IMR-90 (cell line): ENCODE measurements at regions of chr20 and their contacts with region 1.

Region 1: DNA sequence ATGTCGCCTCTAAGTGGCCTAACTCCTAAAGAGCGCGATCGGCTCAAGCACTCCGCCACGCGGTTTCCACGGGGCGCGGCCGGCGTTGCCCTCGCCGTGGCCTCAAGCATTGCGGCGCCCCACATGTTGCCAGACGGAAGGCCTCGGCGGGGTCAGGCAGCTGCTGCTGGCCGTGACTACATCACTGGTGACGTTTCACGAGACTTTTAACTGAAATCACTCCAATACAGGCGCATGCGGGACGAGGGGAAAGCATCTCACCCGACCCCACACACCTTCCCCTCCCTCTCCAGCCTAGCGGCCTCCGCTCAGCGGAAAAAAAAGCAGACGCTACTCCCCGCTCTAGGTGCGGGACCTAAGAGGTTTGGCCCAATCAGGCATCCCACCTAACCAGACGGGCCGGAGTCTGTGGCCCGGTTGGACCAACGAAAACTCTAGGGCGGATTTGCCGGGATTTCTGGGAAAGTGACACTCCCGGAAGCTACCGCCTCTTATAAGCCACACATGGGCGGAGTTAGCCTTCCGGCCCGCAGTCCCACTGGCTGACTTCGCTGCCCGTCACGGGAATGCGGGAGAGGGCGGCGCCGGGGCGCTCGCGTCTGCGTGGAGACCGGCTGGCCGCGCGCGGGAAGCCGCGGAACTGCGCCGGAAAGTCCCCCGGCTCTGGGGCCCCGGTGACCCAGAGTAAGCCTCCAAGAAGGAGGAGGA is at the start of gene NXT1:
- DNase-seq: peak; percentile 99
- ATAC-seq: peak; percentile 89
- H3K4me3 ChIP-seq: peak within 1 kb of the TSS; percentile 72
- H3K27ac ChIP-seq: peak within 1 kb of the TSS; percentile 95
- H3K4me1 ChIP-seq: peaks cover 5% of the 10 kb centered on the region
- H3K27me3 ChIP-seq: no peaks in the 10 kb centered on the region
- CTCF ChIP-seq: no peak
- POLR2A ChIP-seq: peak; percentile 92
- RAD21 ChIP-seq: no peak
- total RNA-seq, gene NXT1: 25.5 and 25.8 TPM in 2 replicates

Region 2: DNA sequence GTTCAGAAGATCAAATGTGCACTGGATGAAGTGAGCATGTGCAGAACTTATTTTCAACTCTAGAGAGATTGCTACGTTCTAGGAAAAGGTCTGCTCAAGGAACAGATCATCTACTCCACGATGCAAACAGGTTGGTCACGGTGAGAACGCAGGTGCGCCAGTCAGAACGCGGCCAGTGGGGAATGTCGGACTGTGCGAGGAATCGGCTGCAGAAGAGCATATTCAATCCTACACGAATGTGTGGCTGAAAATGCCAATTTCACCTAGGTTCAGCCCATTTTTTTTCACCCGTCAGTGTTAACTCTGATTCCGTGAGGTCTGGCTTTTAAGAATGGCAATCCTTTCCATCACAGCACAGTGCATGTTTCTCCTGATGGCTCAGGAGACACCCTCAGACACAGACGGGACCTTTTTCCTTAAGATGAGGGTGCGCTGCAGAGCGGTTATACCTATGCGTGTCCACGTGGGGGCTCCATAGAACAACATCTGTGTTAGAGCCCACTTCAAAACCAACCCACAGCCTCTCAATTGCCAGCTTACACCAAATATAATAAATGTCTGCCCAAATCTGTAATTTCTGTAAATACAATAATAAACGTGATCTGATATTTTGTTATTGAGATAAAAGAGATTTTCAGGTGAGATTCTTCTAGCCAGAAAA is 1016.3 kb before region 1 on chr20:
- CTCF ChIA-PET with region 1: no interaction called
- POLR2A ChIA-PET with region 1: no interaction called
- dilution Hi-C with region 1: no loop called
- in situ Hi-C with region 1: loop called (anchors 25 kb)
- intact Hi-C with region 1: no loop called
- DNase-seq: peak; percentile 47
- ATAC-seq: peak; percentile 99
- H3K4me3 ChIP-seq: no peak overlapping the region
- H3K27ac ChIP-seq: no peak overlapping the region
- H3K4me1 ChIP-seq: no peaks in the 10 kb centered on the region
- H3K27me3 ChIP-seq: no peaks in the 10 kb centered on the region
- CTCF ChIP-seq: peak; percentile 68
- POLR2A ChIP-seq: no peak
- RAD21 ChIP-seq: peak; percentile 37; the same call in 1 of the 2 replicates

Region 3: DNA sequence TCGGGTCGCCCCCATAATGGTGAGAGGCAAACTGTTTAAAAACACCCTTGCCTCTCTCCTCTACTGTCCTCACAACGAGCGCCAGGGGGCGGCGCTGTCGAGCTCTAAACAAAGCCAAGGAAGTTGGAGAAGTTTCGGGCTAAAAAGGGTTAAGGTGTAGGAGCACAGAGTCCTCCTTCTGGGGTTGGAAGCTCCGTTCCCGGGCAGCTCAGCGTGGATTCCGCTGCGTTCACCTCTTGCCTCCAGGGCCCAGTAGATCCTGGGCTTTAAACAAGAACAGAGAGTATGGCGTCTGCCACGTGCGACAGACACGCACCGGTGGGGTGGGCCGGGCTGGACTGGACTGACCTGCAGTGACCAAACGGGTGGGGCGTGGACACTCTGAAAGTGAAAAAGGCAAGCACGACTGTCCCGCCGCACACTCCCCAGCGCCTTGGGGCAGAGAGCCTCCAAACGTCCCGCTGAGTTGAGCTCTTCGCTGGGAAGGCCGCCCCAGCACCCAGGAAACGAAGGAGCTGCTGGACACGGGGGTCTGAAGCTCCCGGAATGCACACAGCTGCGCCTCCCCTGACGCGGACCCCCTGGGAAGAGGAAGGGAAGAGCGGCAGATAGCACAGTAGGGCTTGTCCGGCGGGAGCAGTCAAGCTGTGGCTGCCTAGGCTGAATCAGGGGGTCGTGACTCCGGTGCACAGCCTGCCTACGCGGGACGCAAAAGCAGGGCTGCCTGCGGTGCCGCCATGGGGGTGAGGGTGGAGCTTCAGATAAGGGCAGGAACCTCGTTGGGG is 299.3 kb before region 1 on chr20:
- CTCF ChIA-PET with region 1: interaction called, 7 read pairs
- POLR2A ChIA-PET with region 1: no interaction called
- dilution Hi-C with region 1: no loop called
- in situ Hi-C with region 1: loop called (anchors 10 kb)
- intact Hi-C with region 1: no loop called
- DNase-seq: peak; percentile 52
- ATAC-seq: peak; percentile 54
- H3K4me3 ChIP-seq: peak overlapping the region; percentile 31
- H3K27ac ChIP-seq: no peak overlapping the region; the same call in 1 of the 2 replicates
- H3K4me1 ChIP-seq: peaks cover 4% of the 10 kb centered on the region; the same call in 1 of the 2 replicates
- H3K27me3 ChIP-seq: peaks cover 74% of the 10 kb centered on the region
- CTCF ChIP-seq: peak; percentile 63
- POLR2A ChIP-seq: no peak
- RAD21 ChIP-seq: peak; percentile 67

Region 4: GRCh38 chr20:23187751-23188150 is 162.6 kb before region 1 on chr20:
- CTCF ChIA-PET with region 1: interaction called, 3 read pairs
- POLR2A ChIA-PET with region 1: interaction called, 16 read pairs
- dilution Hi-C with region 1: no loop called
- in situ Hi-C with region 1: no loop called
- intact Hi-C with region 1: no loop called
- DNase-seq: no peak
- ATAC-seq: no peak
- H3K4me3 ChIP-seq: no peak overlapping the region
- H3K27ac ChIP-seq: no peak overlapping the region
- H3K4me1 ChIP-seq: no peaks in the 10 kb centered on the region
- H3K27me3 ChIP-seq: peaks cover 16% of the 10 kb centered on the region
- CTCF ChIP-seq: no peak
- POLR2A ChIP-seq: no peak
- RAD21 ChIP-seq: no peak

Region 5: DNA sequence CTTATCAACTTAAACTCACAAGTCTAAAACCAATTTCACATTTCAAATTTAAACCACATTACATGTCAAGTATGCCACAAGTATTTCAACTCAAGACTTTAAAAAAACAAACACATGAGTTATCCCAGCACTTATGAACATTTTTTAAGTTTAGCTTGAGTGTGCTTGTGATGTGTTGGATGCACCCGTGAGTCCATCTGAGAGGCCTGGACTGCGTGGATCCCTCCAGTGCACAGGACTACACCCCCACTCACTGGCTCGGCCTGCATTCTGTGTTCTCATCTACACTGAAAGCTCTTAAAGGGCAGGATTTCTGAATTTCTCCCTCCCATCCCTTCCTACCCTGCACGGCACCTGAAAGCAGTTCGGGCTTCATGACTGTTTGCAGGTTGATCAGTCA is 135.4 kb before region 1 on chr20:
- CTCF ChIA-PET with region 1: no interaction called
- POLR2A ChIA-PET with region 1: no interaction called
- dilution Hi-C with region 1: no loop called
- in situ Hi-C with region 1: no loop called
- intact Hi-C with region 1: no loop called
- DNase-seq: peak; percentile 55
- ATAC-seq: peak; percentile 54; the same call in 1 of the 2 replicates
- H3K4me3 ChIP-seq: no peak overlapping the region
- H3K27ac ChIP-seq: no peak overlapping the region
- H3K4me1 ChIP-seq: no peaks in the 10 kb centered on the region
- H3K27me3 ChIP-seq: peaks cover 25% of the 10 kb centered on the region
- CTCF ChIP-seq: no peak
- POLR2A ChIP-seq: no peak
- RAD21 ChIP-seq: no peak

Region 6: DNA sequence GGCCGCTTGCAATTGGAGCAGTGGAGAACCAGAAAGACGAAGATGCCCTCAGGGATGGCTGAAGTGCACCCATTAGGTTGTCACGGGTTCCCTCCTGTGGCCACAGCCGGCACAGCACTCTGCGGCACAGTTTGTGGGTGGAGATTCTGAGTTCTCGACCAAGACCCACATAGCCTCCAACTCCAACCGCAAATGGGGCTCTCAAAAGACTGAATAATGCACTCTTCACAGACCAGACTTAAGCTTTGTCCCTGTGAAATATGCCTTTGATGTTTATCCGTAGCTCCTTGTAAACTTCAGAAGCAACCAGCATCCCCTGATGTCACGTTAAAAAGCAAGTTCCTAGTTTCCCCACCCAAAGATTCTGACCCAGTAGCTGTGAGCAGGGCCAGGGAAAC is 256.3 kb after region 1 on chr20:
- CTCF ChIA-PET with region 1: interaction called, 4 read pairs
- POLR2A ChIA-PET with region 1: no interaction called
- dilution Hi-C with region 1: no loop called
- in situ Hi-C with region 1: no loop called
- intact Hi-C with region 1: loop called (anchors 1 kb)
- DNase-seq: peak; percentile 64
- ATAC-seq: peak; percentile 99
- H3K4me3 ChIP-seq: no peak overlapping the region
- H3K27ac ChIP-seq: no peak overlapping the region
- H3K4me1 ChIP-seq: no peaks in the 10 kb centered on the region
- H3K27me3 ChIP-seq: peaks cover 31% of the 10 kb centered on the region
- CTCF ChIP-seq: peak; percentile 89
- POLR2A ChIP-seq: 0 out of 2 replicates have a peak, but pooled peaks have one; percentile 25
- RAD21 ChIP-seq: peak; percentile 89